Heart right ventricle (tissue), 16 donors: ENCODE measurements at regions of chr2 and their contacts with region 1.

Region 1: GRCh38 chr2:229022071-229022470 is 249.0 kb downstream of the PID1 start:
- DNase-seq: no peak
- ATAC-seq: no peak
- H3K4me3 ChIP-seq: no peak overlapping the region
- H3K27ac ChIP-seq: no peak overlapping the region
- H3K4me1 ChIP-seq: no peaks in the 10 kb centered on the region
- H3K27me3 ChIP-seq: no peaks in the 10 kb centered on the region
- CTCF ChIP-seq: no peak

Region 2: GRCh38 chr2:228401065-228401912 is 620.8 kb before region 1 on chr2:
- intact Hi-C with region 1: no loop called
- DNase-seq: no peak
- ATAC-seq: no peak
- H3K4me3 ChIP-seq: no peak overlapping the region
- H3K27ac ChIP-seq: no peak overlapping the region
- H3K4me1 ChIP-seq: no peaks in the 10 kb centered on the region
- H3K27me3 ChIP-seq: no peaks in the 10 kb centered on the region
- CTCF ChIP-seq: no peak

Region 3: GRCh38 chr2:229059331-229060033 is 37.4 kb after region 1 on chr2:
- intact Hi-C with region 1: loop called in 1 of 10 experiments (anchors 1 kb)
- DNase-seq: no peak
- ATAC-seq: no peak
- H3K4me3 ChIP-seq: no peak overlapping the region
- H3K27ac ChIP-seq: no peak overlapping the region
- H3K4me1 ChIP-seq: peaks cover 0 to 5% (median 0%) of the 10 kb centered on the region in 9 donors
- H3K27me3 ChIP-seq: no peaks in the 10 kb centered on the region
- CTCF ChIP-seq: no peak